Endothelial cell of umbilical vein (primary cell): ENCODE measurements at regions of chr9 and their contacts with region 1.

Region 1: GRCh38 chr9:113410207-113410864 is at the starts of genes C9orf43 and POLE3:
- DNase-seq: peak; percentile 97
- H3K4me3 ChIP-seq: peak within 1 kb of the TSS; percentile 86 to 98 (median 92)
- H3K27ac ChIP-seq: peak within 1 kb of the TSS; percentile 84
- H3K4me1 ChIP-seq: peaks cover 9% of the 10 kb centered on the region
- H3K27me3 ChIP-seq: no peaks in the 10 kb centered on the region
- CTCF ChIP-seq: no peak
- POLR2A ChIP-seq: peak; percentile 72
- total RNA-seq, gene C9orf43: 0.66 and 0.88 TPM in 2 replicates
- total RNA-seq, gene POLE3: 53.8 and 54.3 TPM in 2 replicates

Region 2: GRCh38 chr9:113275157-113276131 is 134.9 kb before region 1 on chr9 and contains the starts of genes CDC26 and PRPF4:
- CTCF ChIA-PET with region 1: interaction called, 24 read pairs
- POLR2A ChIA-PET with region 1: interaction called, 5 read pairs
- dilution Hi-C with region 1: no loop called
- intact Hi-C with region 1: loop called (anchors 1 kb)
- DNase-seq: peak; percentile 99
- H3K4me3 ChIP-seq: peak within 1 kb of the TSS; percentile 55 to 81 (median 74)
- H3K27ac ChIP-seq: peak within 1 kb of the TSS; percentile 94
- H3K4me1 ChIP-seq: peaks cover 13% of the 10 kb centered on the region
- H3K27me3 ChIP-seq: no peaks in the 10 kb centered on the region
- CTCF ChIP-seq: no peak
- POLR2A ChIP-seq: peak; percentile 94
- total RNA-seq, gene CDC26: 36.9 and 37.5 TPM in 2 replicates
- total RNA-seq, gene PRPF4: 24.2 and 25.8 TPM in 2 replicates

Region 3: GRCh38 chr9:113309204-113309813 is 101.0 kb before region 1 on chr9:
- CTCF ChIA-PET with region 1: interaction called, 14 read pairs
- POLR2A ChIA-PET with region 1: no interaction called
- dilution Hi-C with region 1: no loop called
- intact Hi-C with region 1: loop called (anchors 1 kb)
- DNase-seq: peak; percentile 55
- H3K4me3 ChIP-seq: no peak overlapping the region
- H3K27ac ChIP-seq: no peak overlapping the region
- H3K4me1 ChIP-seq: no peaks in the 10 kb centered on the region
- H3K27me3 ChIP-seq: no peaks in the 10 kb centered on the region
- CTCF ChIP-seq: peak; percentile 41 to 53
- POLR2A ChIP-seq: no peak

Region 4: GRCh38 chr9:113340017-113340699 is 70.2 kb before region 1 on chr9 and contains the start of gene WDR31:
- CTCF ChIA-PET with region 1: interaction called, 6 read pairs
- POLR2A ChIA-PET with region 1: interaction called, 4 read pairs
- dilution Hi-C with region 1: no loop called
- intact Hi-C with region 1: loop called (anchors 1 kb)
- DNase-seq: peak; percentile 93
- H3K4me3 ChIP-seq: peak within 1 kb of the TSS; percentile 86 to 90 (median 86)
- H3K27ac ChIP-seq: peak within 1 kb of the TSS; percentile 20
- H3K4me1 ChIP-seq: peaks cover 8% of the 10 kb centered on the region
- H3K27me3 ChIP-seq: peaks cover 0 to 5% of the 10 kb centered on the region in 2 experiments
- CTCF ChIP-seq: no peak
- POLR2A ChIP-seq: peak; percentile 58
- total RNA-seq, gene WDR31: 0.62 and 1.00 TPM in 2 replicates

Region 5: GRCh38 chr9:113431191-113431590 is 20.9 kb after region 1 on chr9:
- CTCF ChIA-PET with region 1: interaction called, 6 read pairs
- POLR2A ChIA-PET with region 1: interaction called, 4 read pairs
- dilution Hi-C with region 1: no loop called
- intact Hi-C with region 1: loop called (anchors 2 kb)
- DNase-seq: peak; percentile 89
- H3K4me3 ChIP-seq: no peak overlapping the region
- H3K27ac ChIP-seq: peak overlapping the region; percentile 42
- H3K4me1 ChIP-seq: peaks cover 14% of the 10 kb centered on the region
- H3K27me3 ChIP-seq: no peaks in the 10 kb centered on the region
- CTCF ChIP-seq: no peak
- POLR2A ChIP-seq: no peak

Region 6: GRCh38 chr9:113675475-113675941 is 265.2 kb after region 1 on chr9:
- CTCF ChIA-PET with region 1: no interaction called
- POLR2A ChIA-PET with region 1: no interaction called
- dilution Hi-C with region 1: no loop called
- intact Hi-C with region 1: loop called (anchors 1 kb)
- DNase-seq: peak; percentile 99
- H3K4me3 ChIP-seq: no peak overlapping the region
- H3K27ac ChIP-seq: peak overlapping the region; percentile 83
- H3K4me1 ChIP-seq: peaks cover 30% of the 10 kb centered on the region
- H3K27me3 ChIP-seq: no peaks in the 10 kb centered on the region
- CTCF ChIP-seq: no peak
- POLR2A ChIP-seq: peak; percentile 64